Mammary epithelial cell (primary cell): ENCODE measurements at regions of chr9 and their contacts with region 1.

Region 1: GRCh38 chr9:77163884-77164283 is 13.4 kb upstream of the VPS13A start:
- DNase-seq: peak; percentile 65
- H3K4me3 ChIP-seq: no peak overlapping the region
- H3K27ac ChIP-seq: no peak overlapping the region
- H3K4me1 ChIP-seq: peaks cover 26% of the 10 kb centered on the region
- H3K27me3 ChIP-seq: no peaks in the 10 kb centered on the region
- CTCF ChIP-seq: no peak

Region 2: DNA sequence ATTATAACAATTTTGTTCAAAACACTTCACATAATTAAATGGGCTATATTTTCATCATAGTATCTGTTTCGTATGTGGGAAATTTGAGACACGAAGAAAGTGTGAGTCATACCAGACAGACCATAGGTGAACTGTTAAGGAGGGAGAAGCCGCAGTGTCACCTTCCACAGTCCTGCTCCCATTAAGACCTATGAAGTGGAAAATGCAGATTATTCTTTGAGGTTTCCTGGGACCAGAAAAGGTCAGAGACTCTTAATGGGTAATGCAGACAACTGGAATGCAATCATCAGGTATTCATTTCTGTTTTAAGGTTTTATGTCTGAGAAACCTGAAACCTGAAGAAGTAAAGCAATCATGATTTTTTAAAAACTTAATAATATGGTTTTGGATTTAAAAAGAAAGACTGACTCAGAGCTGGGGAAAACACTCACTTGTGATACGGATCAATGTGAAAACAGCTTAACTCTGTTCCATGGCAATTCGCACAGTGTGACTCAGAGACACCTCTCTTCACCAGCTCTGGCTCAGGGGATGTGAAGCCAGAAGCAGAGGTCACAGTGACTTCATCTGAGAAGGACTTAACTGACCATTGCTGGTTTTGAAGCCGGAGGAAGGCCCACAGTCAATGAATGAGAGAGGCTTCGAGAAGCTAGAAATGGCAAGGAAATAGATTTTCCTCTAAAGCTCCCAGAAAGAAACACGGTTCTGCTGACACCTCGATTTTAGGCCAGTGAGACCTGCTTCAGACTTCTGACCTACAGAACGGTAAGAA is 722.1 kb before region 1 on chr9:
- CTCF ChIA-PET with region 1: no interaction called
- dilution Hi-C with region 1: no loop called
- in situ Hi-C with region 1: loop called in 1 of 2 experiments (anchors 25 kb)
- intact Hi-C with region 1: no loop called
- DNase-seq: peak; percentile 40
- H3K4me3 ChIP-seq: no peak overlapping the region
- H3K27ac ChIP-seq: no peak overlapping the region
- H3K4me1 ChIP-seq: no peaks in the 10 kb centered on the region
- H3K27me3 ChIP-seq: no peaks in the 10 kb centered on the region
- CTCF ChIP-seq: no peak

Region 3: DNA sequence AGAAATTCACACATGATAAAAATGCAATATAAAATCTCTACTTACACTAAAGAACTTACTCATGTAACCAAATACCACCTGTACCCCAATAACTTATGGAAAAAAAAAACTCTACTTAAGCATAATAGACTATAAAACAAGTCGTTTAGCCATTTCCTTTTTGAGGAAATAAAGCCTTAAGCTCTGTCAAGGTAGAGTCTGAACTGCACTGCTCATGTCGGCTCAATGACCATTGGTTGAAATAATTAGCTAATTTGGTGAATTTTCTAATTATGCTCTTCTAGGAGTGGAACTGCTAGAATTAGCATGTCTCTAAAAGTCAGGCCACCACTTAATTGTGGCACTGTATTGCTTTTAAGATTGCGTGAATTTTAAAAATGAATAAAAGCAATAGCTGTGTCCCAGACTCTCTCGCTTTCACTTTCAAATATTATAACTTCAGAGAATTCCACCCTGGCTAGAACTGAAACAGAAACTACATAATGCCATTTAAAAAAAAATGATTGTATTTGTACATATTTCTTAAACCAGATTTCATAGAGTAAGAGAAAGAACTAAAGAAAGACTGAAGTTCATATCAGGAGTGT is 512.7 kb before region 1 on chr9:
- CTCF ChIA-PET with region 1: no interaction called
- dilution Hi-C with region 1: no loop called
- in situ Hi-C with region 1: no loop called
- intact Hi-C with region 1: loop called (anchors 2 kb)
- DNase-seq: no peak
- H3K4me3 ChIP-seq: no peak overlapping the region
- H3K27ac ChIP-seq: no peak overlapping the region
- H3K4me1 ChIP-seq: peaks cover 25% of the 10 kb centered on the region
- H3K27me3 ChIP-seq: no peaks in the 10 kb centered on the region
- CTCF ChIP-seq: no peak

Region 4: GRCh38 chr9:76787677-76788076 is 376.2 kb before region 1 on chr9:
- CTCF ChIA-PET with region 1: no interaction called
- dilution Hi-C with region 1: no loop called
- in situ Hi-C with region 1: no loop called
- intact Hi-C with region 1: no loop called
- DNase-seq: no peak
- H3K4me3 ChIP-seq: no peak overlapping the region
- H3K27ac ChIP-seq: no peak overlapping the region
- H3K4me1 ChIP-seq: no peaks in the 10 kb centered on the region
- H3K27me3 ChIP-seq: no peaks in the 10 kb centered on the region
- CTCF ChIP-seq: no peak

Region 5: GRCh38 chr9:76810377-76810957 is 353.4 kb before region 1 on chr9:
- CTCF ChIA-PET with region 1: interaction called, 3 read pairs
- dilution Hi-C with region 1: no loop called
- in situ Hi-C with region 1: loop called (anchors 25 kb)
- intact Hi-C with region 1: loop called (anchors 1 kb)
- DNase-seq: peak; percentile 35
- H3K4me3 ChIP-seq: no peak overlapping the region
- H3K27ac ChIP-seq: no peak overlapping the region
- H3K4me1 ChIP-seq: no peaks in the 10 kb centered on the region
- H3K27me3 ChIP-seq: peaks cover 2% of the 10 kb centered on the region
- CTCF ChIP-seq: peak; percentile 93 to 98

Region 6: DNA sequence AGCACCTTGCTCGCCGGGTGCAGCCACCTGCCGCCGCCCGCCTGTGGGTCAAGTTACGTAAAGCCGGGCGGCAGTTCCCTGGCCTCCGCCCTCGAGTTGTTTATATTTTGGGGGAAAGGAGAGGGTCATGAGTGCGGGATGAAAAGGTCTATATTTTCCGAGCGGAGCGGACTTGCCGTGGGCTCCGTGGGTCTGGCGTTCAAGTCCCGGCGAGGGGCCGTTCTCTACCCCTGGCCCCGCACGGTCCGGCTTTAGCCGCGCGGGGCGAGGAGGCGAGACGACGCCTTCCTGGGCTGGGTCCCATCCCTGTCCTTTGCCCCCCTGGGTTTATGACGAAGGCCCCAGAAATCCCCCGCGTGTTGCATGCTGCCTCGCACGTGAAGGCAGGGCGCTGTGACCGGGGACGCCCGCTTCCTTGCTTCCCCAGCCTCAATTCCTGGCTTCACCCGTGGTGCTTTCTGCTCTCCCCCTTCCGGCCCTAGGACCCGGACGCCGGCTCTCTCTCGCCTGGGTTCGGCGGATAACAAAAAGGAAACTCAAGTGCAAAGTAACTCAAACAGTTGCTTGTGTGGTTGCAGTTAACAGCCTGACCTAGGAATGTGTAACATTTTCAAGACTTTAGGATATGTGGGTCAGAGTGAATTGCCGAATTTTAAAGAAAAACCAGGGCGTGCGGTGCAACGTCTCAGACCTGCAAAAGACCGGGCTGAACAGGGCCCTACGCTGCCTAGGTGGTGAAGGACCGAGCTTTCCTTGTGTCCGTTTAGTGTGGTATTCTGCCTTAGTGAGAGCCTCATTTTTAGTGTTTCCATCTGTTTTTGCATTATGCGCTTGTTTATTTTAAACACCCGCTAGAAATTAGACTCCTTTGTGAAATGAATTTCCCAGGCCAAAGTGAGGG is 14.3 kb after region 1 on chr9:
- CTCF ChIA-PET with region 1: no interaction called
- dilution Hi-C with region 1: no loop called
- in situ Hi-C with region 1: no loop called
- intact Hi-C with region 1: no loop called
- DNase-seq: peak; percentile 40
- H3K4me3 ChIP-seq: peak overlapping the region; percentile 91 to 98 (median 94)
- H3K27ac ChIP-seq: peak overlapping the region; percentile 74
- H3K4me1 ChIP-seq: peaks cover 8% of the 10 kb centered on the region
- H3K27me3 ChIP-seq: no peaks in the 10 kb centered on the region
- CTCF ChIP-seq: no peak

Region 7: GRCh38 chr9:77488439-77489126 is 324.7 kb after region 1 on chr9:
- CTCF ChIA-PET with region 1: no interaction called
- dilution Hi-C with region 1: no loop called
- in situ Hi-C with region 1: no loop called
- intact Hi-C with region 1: loop called (anchors 2 kb)
- DNase-seq: no peak
- H3K4me3 ChIP-seq: no peak overlapping the region
- H3K27ac ChIP-seq: no peak overlapping the region
- H3K4me1 ChIP-seq: no peaks in the 10 kb centered on the region
- H3K27me3 ChIP-seq: no peaks in the 10 kb centered on the region
- CTCF ChIP-seq: peak; percentile 39 to 64